ENCODE measurements at regions of chr15 and their contacts with region 1.

Region 1: GRCh38 chr15:49421991-49422390 is 1.1 kb upstream of the FGF7 start:
- DNase-seq: peak; percentile 81
- ATAC-seq: peak; percentile 50
- H3K4me3 ChIP-seq: no peak overlapping the region
- H3K27ac ChIP-seq: peak overlapping the region; percentile 69; the same call in 1 of the 2 replicates
- H3K4me1 ChIP-seq: no peaks in the 10 kb centered on the region; the same call in 1 of the 2 replicates
- H3K27me3 ChIP-seq: no peaks in the 10 kb centered on the region
- CTCF ChIP-seq: peak; percentile 90
- POLR2A ChIP-seq: no peak
- RAD21 ChIP-seq: peak; percentile 82

Region 2: GRCh38 chr15:47870956-47871625 is 1550.9 kb before region 1 on chr15:
- CTCF ChIA-PET with region 1: no interaction called
- POLR2A ChIA-PET with region 1: no interaction called
- dilution Hi-C with region 1: no loop called
- in situ Hi-C with region 1: no loop called
- intact Hi-C with region 1: no loop called
- DNase-seq: peak; percentile 38
- ATAC-seq: peak; percentile 49; the same call in 1 of the 2 replicates
- H3K4me3 ChIP-seq: no peak overlapping the region
- H3K27ac ChIP-seq: no peak overlapping the region
- H3K4me1 ChIP-seq: no peaks in the 10 kb centered on the region
- H3K27me3 ChIP-seq: no peaks in the 10 kb centered on the region
- CTCF ChIP-seq: no peak
- POLR2A ChIP-seq: no peak
- RAD21 ChIP-seq: no peak

Region 3: DNA sequence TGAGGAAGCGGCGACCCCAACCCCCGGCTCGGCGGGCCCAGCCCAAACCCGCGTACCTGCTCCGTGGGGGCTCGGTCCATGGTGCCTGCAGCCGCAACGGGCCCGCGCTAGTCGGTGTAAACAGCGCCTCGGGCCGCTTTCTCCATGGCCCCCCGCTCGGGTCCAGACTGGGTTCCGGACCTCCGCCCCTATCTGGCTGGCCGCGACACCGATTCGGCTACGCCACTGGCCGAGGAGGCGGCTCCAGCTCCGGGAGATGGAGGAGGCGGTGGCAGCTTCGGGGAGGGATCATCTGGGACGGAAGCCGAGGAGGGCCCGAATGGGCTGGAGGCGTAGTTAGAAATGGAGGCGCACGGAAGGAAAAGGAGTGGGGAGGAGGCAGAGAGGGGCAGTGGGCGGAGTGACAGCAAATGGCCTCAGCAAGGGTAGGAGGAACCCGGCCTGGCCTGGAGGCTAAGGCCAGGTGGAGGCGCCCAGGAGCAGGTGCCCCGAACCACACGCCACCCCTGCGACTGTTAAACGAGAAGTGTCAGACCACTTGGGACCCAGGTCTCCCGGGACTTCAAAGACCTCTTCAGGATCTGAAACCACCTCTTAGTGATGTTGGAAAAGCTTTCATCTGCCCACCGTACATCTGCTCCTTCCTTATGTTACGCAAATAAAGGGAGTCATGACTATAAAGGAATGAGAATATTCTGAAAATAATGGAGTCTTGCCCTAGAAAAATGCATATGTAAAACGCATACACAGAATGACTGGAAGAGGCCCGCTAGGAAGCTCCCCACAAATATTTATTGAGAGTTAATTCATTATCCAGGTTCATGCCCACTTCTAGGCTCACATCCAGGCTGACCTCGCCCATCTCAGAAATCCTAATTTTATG is 375.5 kb before region 1 on chr15 and contains the start of gene SECISBP2L:
- CTCF ChIA-PET with region 1: no interaction called
- POLR2A ChIA-PET with region 1: no interaction called
- dilution Hi-C with region 1: no loop called
- in situ Hi-C with region 1: no loop called
- intact Hi-C with region 1: loop called (anchors 5 kb)
- DNase-seq: peak; percentile 92
- ATAC-seq: peak; percentile 97
- H3K4me3 ChIP-seq: peak within 1 kb of the TSS; percentile 97
- H3K27ac ChIP-seq: peak within 1 kb of the TSS; percentile 77
- H3K4me1 ChIP-seq: no peaks in the 10 kb centered on the region
- H3K27me3 ChIP-seq: no peaks in the 10 kb centered on the region
- CTCF ChIP-seq: peak; percentile 36
- POLR2A ChIP-seq: peak; percentile 74
- RAD21 ChIP-seq: peak; percentile 23; the same call in 1 of the 2 replicates
- total RNA-seq, gene SECISBP2L: 34.1 and 45.0 TPM in 2 replicates

Region 4: GRCh38 chr15:49242820-49243219 is 179.2 kb before region 1 on chr15:
- CTCF ChIA-PET with region 1: no interaction called
- POLR2A ChIA-PET with region 1: interaction called, 3 read pairs
- dilution Hi-C with region 1: no loop called
- in situ Hi-C with region 1: loop called (anchors 5 kb)
- intact Hi-C with region 1: no loop called
- DNase-seq: peak; percentile 95
- ATAC-seq: peak; percentile 81
- H3K4me3 ChIP-seq: no peak overlapping the region
- H3K27ac ChIP-seq: peak overlapping the region; percentile 91
- H3K4me1 ChIP-seq: peaks cover 15% of the 10 kb centered on the region
- H3K27me3 ChIP-seq: no peaks in the 10 kb centered on the region
- CTCF ChIP-seq: no peak
- POLR2A ChIP-seq: no peak
- RAD21 ChIP-seq: no peak

Region 5: DNA sequence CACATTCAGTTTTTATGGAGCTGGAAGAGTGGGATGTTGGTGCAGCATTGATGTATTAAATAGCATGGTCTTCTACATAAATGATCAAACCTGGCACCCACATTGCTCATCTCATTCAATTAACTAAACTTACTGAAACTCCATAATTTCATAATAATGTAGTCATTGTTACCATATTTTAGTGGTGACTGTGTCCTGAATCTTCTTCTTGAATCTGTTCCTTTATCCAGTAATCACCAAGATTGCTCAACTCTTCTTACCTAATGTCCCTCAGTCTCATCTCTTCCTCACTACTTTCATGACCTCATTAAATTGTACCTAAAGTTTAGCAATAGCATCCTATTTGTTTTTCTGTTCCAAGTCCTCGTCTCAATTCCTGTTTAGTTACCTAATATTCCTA is 70.8 kb after region 1 on chr15:
- CTCF ChIA-PET with region 1: no interaction called
- POLR2A ChIA-PET with region 1: no interaction called
- dilution Hi-C with region 1: no loop called
- in situ Hi-C with region 1: no loop called
- intact Hi-C with region 1: no loop called
- DNase-seq: peak; percentile 90
- ATAC-seq: no peak
- H3K4me3 ChIP-seq: no peak overlapping the region
- H3K27ac ChIP-seq: no peak overlapping the region
- H3K4me1 ChIP-seq: peaks cover 14% of the 10 kb centered on the region
- H3K27me3 ChIP-seq: no peaks in the 10 kb centered on the region
- CTCF ChIP-seq: no peak
- POLR2A ChIP-seq: no peak
- RAD21 ChIP-seq: no peak

Region 6: DNA sequence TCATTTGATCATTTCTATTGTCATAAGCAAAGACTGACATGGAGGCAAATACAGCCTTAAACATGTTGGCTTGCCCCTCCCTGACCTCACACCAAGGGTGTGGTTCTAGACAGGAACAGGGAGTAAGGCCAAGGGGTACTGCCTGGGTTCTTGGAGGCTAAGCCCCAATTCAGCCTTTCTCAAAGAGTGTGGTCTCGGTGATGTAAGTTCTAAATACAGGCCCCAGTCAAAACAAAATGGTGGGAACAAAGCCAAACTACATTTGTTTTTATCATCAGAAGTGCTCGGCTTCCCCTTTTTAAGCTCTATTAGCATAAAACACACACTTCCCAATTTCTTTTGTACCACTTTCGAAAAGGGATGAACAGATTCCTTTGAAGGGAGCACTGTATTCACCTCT is 567.5 kb after region 1 on chr15:
- CTCF ChIA-PET with region 1: no interaction called
- POLR2A ChIA-PET with region 1: no interaction called
- dilution Hi-C with region 1: no loop called
- in situ Hi-C with region 1: loop called (anchors 10 kb)
- intact Hi-C with region 1: no loop called
- DNase-seq: no peak
- ATAC-seq: no peak
- H3K4me3 ChIP-seq: no peak overlapping the region
- H3K27ac ChIP-seq: peak overlapping the region; percentile 57; the same call in 1 of the 2 replicates
- H3K4me1 ChIP-seq: peaks cover 20% of the 10 kb centered on the region
- H3K27me3 ChIP-seq: no peaks in the 10 kb centered on the region
- CTCF ChIP-seq: no peak
- POLR2A ChIP-seq: no peak
- RAD21 ChIP-seq: no peak

Region 7: GRCh38 chr15:50134520-50135024 is 712.6 kb after region 1 on chr15:
- CTCF ChIA-PET with region 1: no interaction called
- POLR2A ChIA-PET with region 1: no interaction called
- dilution Hi-C with region 1: no loop called
- in situ Hi-C with region 1: no loop called
- intact Hi-C with region 1: loop called (anchors 1 kb)
- DNase-seq: peak; percentile 89
- ATAC-seq: peak; percentile 44
- H3K4me3 ChIP-seq: no peak overlapping the region
- H3K27ac ChIP-seq: peak overlapping the region; percentile 60
- H3K4me1 ChIP-seq: peaks cover 17% of the 10 kb centered on the region
- H3K27me3 ChIP-seq: no peaks in the 10 kb centered on the region
- CTCF ChIP-seq: no peak
- POLR2A ChIP-seq: no peak
- RAD21 ChIP-seq: no peak

Measured in IMR-90 (cell line).